Panc1 (cell line): ENCODE measurements at regions of chr18 and their contacts with region 1.

Region 1: GRCh38 chr18:62183578-62184195 is 3.2 kb downstream of the PIGN start:
- DNase-seq: peak; percentile 57
- ATAC-seq: no peak
- H3K4me3 ChIP-seq: no peak overlapping the region
- H3K27ac ChIP-seq: no peak overlapping the region
- H3K4me1 ChIP-seq: peaks cover 9% of the 10 kb centered on the region; the same call in 1 of the 2 replicates
- H3K27me3 ChIP-seq: no peaks in the 10 kb centered on the region
- CTCF ChIP-seq: peak; percentile 81; the same call in 1 of the 2 replicates

Region 2: DNA sequence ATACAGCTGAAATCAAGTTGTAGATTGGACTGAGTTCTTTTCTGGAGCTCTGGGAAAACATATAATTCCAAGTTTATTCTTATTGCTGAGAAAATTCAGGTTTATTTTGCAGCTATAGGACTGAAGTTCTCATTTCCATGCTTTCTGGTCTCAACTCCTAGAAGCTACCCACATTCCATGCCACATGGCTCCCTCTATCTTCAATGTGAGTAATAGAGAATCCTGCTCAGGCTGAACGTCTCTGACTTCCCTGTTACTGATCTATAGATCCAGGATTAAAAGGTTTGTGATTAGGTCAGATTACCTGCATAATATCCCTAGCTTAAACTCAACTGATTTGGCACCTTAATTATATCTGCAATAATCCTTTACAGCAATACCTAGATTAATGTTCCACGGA is 1357.3 kb before region 1 on chr18:
- CTCF ChIA-PET with region 1: no interaction called
- POLR2A ChIA-PET with region 1: no interaction called
- in situ Hi-C with region 1: no loop called
- intact Hi-C with region 1: no loop called
- DNase-seq: no peak
- ATAC-seq: no peak
- H3K4me3 ChIP-seq: no peak overlapping the region
- H3K27ac ChIP-seq: no peak overlapping the region
- H3K4me1 ChIP-seq: no peaks in the 10 kb centered on the region
- H3K27me3 ChIP-seq: no peaks in the 10 kb centered on the region
- CTCF ChIP-seq: no peak

Region 3: DNA sequence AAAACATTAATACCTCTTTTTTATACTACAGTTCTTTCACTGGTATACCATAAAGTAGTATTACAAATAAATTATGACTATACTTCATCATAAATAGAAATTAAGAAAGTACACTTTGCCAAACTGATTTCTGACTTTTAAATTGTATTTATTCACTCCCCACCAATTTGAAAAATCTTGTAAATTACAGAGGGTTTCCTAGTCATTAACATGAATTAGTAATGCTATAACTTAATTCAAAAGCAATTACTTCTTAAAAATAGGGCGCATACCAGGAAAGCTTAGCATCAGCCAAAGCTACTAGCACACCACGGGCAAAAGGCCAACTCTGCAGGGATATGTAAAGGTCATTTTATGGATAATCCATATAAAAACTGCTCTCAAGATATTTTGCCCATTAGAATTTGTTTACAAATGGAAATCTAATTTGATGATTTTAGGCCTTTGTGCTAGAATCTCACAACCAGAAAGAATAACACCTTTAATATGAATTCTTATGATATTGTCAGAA is 139.1 kb before region 1 on chr18:
- CTCF ChIA-PET with region 1: no interaction called
- POLR2A ChIA-PET with region 1: no interaction called
- in situ Hi-C with region 1: no loop called
- intact Hi-C with region 1: no loop called
- DNase-seq: no peak
- ATAC-seq: no peak
- H3K4me3 ChIP-seq: no peak overlapping the region
- H3K27ac ChIP-seq: no peak overlapping the region
- H3K4me1 ChIP-seq: no peaks in the 10 kb centered on the region
- H3K27me3 ChIP-seq: no peaks in the 10 kb centered on the region
- CTCF ChIP-seq: no peak

Region 4: GRCh38 chr18:62249478-62250097 is 65.9 kb after region 1 on chr18:
- CTCF ChIA-PET with region 1: no interaction called
- POLR2A ChIA-PET with region 1: no interaction called
- in situ Hi-C with region 1: no loop called
- intact Hi-C with region 1: loop called (anchors 2 kb)
- DNase-seq: peak; percentile 35
- ATAC-seq: no peak; the same call in 1 of the 2 replicates
- H3K4me3 ChIP-seq: no peak overlapping the region
- H3K27ac ChIP-seq: no peak overlapping the region
- H3K4me1 ChIP-seq: no peaks in the 10 kb centered on the region
- H3K27me3 ChIP-seq: no peaks in the 10 kb centered on the region
- CTCF ChIP-seq: peak; percentile 60; the same call in 1 of the 2 replicates